ENCODE measurements at regions of chr14 and their contacts with region 1.

Region 1: DNA sequence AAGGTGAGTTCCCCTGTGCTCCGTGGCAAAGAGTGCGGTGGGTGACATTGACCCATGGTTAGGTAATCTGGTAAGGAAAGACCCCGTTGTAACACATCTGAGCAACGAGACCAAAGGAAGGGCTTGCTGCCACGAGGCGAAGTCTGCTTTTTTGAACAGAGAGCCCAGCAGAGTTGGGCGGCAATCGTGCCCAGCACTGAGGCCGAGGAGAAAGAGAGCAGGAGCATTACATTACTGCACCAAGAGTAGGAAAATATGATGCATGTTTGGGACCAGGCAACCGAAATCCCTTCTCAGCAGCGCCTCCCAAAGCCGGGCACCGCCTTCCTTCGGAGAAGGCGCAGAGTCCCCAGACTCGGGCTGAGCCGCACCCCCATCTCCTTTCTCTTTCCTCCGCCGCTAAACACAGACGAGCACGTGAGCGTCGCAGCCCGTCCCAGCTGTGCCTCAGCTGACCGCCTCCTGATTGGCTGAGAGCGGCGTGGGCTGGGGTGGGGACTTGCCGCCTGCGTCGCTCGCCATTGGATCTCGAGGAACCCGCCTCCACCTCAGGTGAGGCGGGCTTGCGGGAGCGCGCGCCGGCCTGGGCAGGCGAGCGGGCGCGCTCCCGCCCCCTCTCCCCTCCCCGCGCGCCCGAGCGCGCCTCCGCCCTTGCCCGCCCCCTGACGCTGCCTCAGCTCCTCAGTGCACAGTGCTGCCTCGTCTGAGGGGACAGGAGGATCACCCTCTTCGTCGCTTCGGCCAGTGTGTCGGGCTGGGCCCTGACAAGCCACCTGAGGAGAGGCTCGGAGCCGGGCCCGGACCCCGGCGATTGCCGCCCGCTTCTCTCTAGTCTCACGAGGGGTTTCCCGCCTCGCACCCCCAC is at the start of gene HIF1A:
- DNase-seq: peak; percentile 99
- ATAC-seq: peak; percentile 94
- H3K4me3 ChIP-seq: peak within 1 kb of the TSS; percentile 92 to 98 (median 94)
- H3K4me3 Mint-ChIP-seq: peak within 1 kb of the TSS; percentile 97
- H3K27ac ChIP-seq: peak within 1 kb of the TSS; percentile 92 to 94
- H3K27ac Mint-ChIP-seq: peak within 1 kb of the TSS; percentile 97
- H3K4me1 ChIP-seq: peaks cover 20 to 35% of the 10 kb centered on the region in 2 donors
- H3K4me1 Mint-ChIP-seq: peaks cover 35% of the 10 kb centered on the region
- H3K27me3 ChIP-seq: no peaks in the 10 kb centered on the region
- H3K27me3 Mint-ChIP-seq: no peaks in the 10 kb centered on the region
- CTCF ChIP-seq: no peak
- total RNA-seq, gene HIF1A: 261 and 264 TPM in 2 replicates

Region 2: DNA sequence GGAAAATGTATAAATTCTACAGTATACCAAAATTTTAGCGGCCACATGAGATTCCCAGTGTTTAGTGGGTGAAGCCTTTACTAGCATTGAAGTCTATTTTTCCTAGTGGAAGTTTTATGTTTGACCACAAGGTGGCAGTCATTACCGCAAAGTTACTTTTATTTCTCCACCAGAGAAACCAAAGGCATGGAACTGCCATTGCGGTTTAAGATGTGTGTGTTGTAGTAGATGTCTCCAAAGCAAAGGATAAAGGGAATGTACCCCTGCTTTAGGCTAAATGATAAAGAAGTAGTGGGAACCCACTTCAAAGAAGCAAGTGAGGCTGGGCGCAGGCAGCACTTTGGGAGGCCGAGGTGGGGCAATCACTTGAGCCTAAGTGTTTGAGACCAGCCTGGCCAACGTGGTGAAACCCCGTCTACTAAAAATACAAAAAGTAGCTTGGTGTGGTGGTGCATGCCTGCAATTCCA is 233.2 kb before region 1 on chr14:
- CTCF ChIA-PET with region 1: interaction called, 10 read pairs
- POLR2A ChIA-PET with region 1: no interaction called
- intact Hi-C with region 1: no loop called
- DNase-seq: peak; percentile 80
- ATAC-seq: peak; percentile 70
- H3K4me3 ChIP-seq: no peak overlapping the region
- H3K4me3 Mint-ChIP-seq: peak overlapping the region; percentile 21
- H3K27ac ChIP-seq: no peak overlapping the region
- H3K27ac Mint-ChIP-seq: peak overlapping the region; percentile 74
- H3K4me1 ChIP-seq: peaks cover 8 to 18% of the 10 kb centered on the region in 2 donors
- H3K4me1 Mint-ChIP-seq: peaks cover 30% of the 10 kb centered on the region
- H3K27me3 ChIP-seq: no peaks in the 10 kb centered on the region
- H3K27me3 Mint-ChIP-seq: no peaks in the 10 kb centered on the region
- CTCF ChIP-seq: peak; percentile 94

Region 3: GRCh38 chr14:61662437-61663311 is 32.4 kb before region 1 on chr14:
- CTCF ChIA-PET with region 1: no interaction called
- POLR2A ChIA-PET with region 1: interaction called, 6 read pairs
- intact Hi-C with region 1: loop called (anchors 1 kb)
- DNase-seq: peak; percentile 59
- ATAC-seq: peak; percentile 66
- H3K4me3 ChIP-seq: peak overlapping the region in 1 of 5 experiments; percentile 52
- H3K4me3 Mint-ChIP-seq: peak overlapping the region; percentile 84
- H3K27ac ChIP-seq: peak overlapping the region; percentile 48 to 82
- H3K27ac Mint-ChIP-seq: peak overlapping the region; percentile 91
- H3K4me1 ChIP-seq: peaks cover 59 to 60% of the 10 kb centered on the region in 2 donors
- H3K4me1 Mint-ChIP-seq: peaks cover 59% of the 10 kb centered on the region
- H3K27me3 ChIP-seq: no peaks in the 10 kb centered on the region
- H3K27me3 Mint-ChIP-seq: no peaks in the 10 kb centered on the region
- CTCF ChIP-seq: no peak

Region 4: GRCh38 chr14:61710853-61711817 is 16.1 kb after region 1 on chr14:
- CTCF ChIA-PET with region 1: interaction called, 6 read pairs
- POLR2A ChIA-PET with region 1: interaction called, 5 read pairs
- intact Hi-C with region 1: loop called (anchors 2 kb)
- DNase-seq: peak; percentile 32
- ATAC-seq: peak; percentile 60
- H3K4me3 ChIP-seq: no peak overlapping the region
- H3K4me3 Mint-ChIP-seq: peak overlapping the region; percentile 63
- H3K27ac ChIP-seq: peak overlapping the region in 1 of 2 donors; percentile 17
- H3K27ac Mint-ChIP-seq: peak overlapping the region; percentile 21
- H3K4me1 ChIP-seq: peaks cover 46 to 59% of the 10 kb centered on the region in 2 donors
- H3K4me1 Mint-ChIP-seq: peaks cover 80% of the 10 kb centered on the region
- H3K27me3 ChIP-seq: no peaks in the 10 kb centered on the region
- H3K27me3 Mint-ChIP-seq: no peaks in the 10 kb centered on the region
- CTCF ChIP-seq: no peak

Region 5: DNA sequence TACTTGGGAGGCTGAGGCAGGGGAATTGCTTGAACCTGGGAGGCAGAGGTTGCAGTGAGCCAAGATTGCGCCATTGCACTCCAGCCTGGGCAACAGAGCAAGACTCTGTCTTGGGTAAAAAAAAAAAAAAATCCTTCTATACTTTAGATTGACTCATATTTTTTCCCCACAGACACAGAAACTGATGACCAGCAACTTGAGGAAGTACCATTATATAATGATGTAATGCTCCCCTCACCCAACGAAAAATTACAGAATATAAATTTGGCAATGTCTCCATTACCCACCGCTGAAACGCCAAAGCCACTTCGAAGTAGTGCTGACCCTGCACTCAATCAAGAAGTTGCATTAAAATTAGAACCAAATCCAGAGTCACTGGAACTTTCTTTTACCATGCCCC is 42.9 kb after region 1 on chr14:
- CTCF ChIA-PET with region 1: no interaction called
- POLR2A ChIA-PET with region 1: interaction called, 3 read pairs
- intact Hi-C with region 1: loop called (anchors 5 kb)
- DNase-seq: no peak
- ATAC-seq: no peak
- H3K4me3 ChIP-seq: no peak overlapping the region
- H3K4me3 Mint-ChIP-seq: no peak overlapping the region
- H3K27ac ChIP-seq: peak overlapping the region in 1 of 2 donors; percentile 30
- H3K27ac Mint-ChIP-seq: no peak overlapping the region
- H3K4me1 ChIP-seq: peaks cover 0 to 3% of the 10 kb centered on the region in 2 donors
- H3K4me1 Mint-ChIP-seq: peaks cover 15% of the 10 kb centered on the region
- H3K27me3 ChIP-seq: no peaks in the 10 kb centered on the region
- H3K27me3 Mint-ChIP-seq: no peaks in the 10 kb centered on the region
- CTCF ChIP-seq: no peak

Region 6: GRCh38 chr14:61750708-61751474 is 55.8 kb after region 1 on chr14:
- CTCF ChIA-PET with region 1: no interaction called
- POLR2A ChIA-PET with region 1: interaction called, 4 read pairs
- intact Hi-C with region 1: loop called (anchors 2 kb)
- DNase-seq: peak; percentile 91
- ATAC-seq: peak; percentile 91
- H3K4me3 ChIP-seq: peak overlapping the region; percentile 47 to 71 (median 59)
- H3K4me3 Mint-ChIP-seq: peak overlapping the region; percentile 92
- H3K27ac ChIP-seq: peak overlapping the region; percentile 47 to 73
- H3K27ac Mint-ChIP-seq: peak overlapping the region; percentile 93
- H3K4me1 ChIP-seq: peaks cover 25 to 27% of the 10 kb centered on the region in 2 donors
- H3K4me1 Mint-ChIP-seq: peaks cover 42% of the 10 kb centered on the region
- H3K27me3 ChIP-seq: no peaks in the 10 kb centered on the region
- H3K27me3 Mint-ChIP-seq: no peaks in the 10 kb centered on the region
- CTCF ChIP-seq: no peak